Left cardiac atrium (tissue), 4 donors: ENCODE measurements at regions of chr6 and their contacts with region 1.

Region 1: DNA sequence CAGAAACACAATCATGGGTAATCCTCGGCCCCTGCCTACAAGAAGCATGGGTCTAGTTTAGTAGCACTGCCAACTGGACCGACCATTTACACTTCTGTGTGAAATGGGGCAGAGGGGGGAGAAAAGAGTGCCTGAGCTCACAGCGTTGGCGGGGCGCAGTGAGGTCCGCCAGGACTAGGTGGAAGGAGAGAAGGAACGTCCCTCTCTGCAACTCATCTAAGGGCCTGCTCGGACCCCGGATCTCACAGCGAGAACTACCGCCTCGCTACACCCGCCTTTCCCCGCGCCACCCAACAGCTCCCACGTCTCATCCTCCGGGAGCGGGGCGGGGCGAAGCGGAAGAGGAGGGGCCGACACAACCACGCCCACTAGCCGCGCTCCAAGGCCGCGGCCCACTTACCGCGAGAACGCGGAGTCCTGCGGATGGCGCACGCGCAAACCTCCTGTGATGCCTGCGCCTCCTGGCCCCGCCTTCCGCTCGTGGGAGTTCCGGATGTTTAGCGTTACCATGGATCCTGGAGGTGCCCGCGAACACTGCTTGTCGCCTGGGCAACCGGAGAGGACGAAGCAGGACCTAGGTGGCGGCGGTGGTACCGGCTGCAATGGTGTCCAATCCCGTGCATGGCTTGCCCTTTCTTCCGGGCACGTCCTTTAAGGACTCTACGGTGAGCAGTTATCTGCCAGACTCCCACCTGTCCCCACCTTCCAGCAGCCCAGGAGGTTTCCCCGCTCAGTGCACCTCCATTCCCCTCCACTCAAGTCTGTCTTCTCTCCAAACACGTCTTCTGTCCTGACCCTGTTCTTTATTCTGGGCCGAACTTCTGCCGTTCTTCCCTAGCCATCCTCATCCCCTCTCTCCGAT is at the start of gene EFHC1:
- DNase-seq: peak; percentile 99
- ATAC-seq: peak; percentile 96 to 98
- total RNA-seq, gene EFHC1: 7.3 to 7.9 TPM

Region 2: GRCh38 chr6:52497652-52498408 is 77.8 kb after region 1 on chr6:
- intact Hi-C with region 1: loop called in 1 of 2 experiments (anchors 5 kb)
- DNase-seq: peak; percentile 71
- ATAC-seq: peak in 1 of 2 donors; percentile 37

Region 3: GRCh38 chr6:52577022-52577777 is 157.2 kb after region 1 on chr6 and contains the start of gene TRAM2:
- intact Hi-C with region 1: loop called in 1 of 2 experiments (anchors 5 kb)
- DNase-seq: peak; percentile 92
- ATAC-seq: peak; percentile 90 to 93
- total RNA-seq, gene TRAM2: 14.1 to 19.2 TPM

Region 4: DNA sequence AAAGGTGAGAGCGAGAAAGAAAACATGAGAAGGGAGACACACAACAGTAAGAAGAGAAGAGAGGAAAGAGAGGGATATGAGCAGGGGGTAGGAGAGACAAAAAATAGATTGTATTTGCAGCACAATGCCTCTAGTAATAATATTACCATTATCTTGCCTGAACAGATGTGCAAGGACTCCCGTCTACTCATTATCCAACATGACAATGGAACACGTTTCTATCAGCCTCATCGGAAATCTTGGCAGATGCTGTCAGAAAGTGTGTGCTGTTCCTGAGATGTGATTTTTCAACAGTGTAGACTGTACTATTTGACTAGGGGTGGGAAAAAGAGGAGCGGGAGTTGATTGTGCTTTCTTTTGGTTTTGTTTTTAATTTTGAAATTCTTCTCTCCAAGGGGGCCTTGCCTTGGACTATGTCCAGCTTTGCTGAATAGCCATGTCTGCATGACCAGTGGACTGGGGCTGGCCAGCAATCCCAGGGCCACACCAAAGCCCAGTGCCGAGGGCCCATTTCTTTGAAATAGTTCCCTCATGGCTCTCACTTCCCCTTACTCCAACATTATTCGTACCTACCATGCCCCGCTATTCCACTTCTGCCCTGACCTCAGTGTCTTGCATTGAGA is 168.2 kb after region 1 on chr6:
- intact Hi-C with region 1: loop called in 1 of 2 experiments (anchors 5 kb)
- DNase-seq: no peak
- ATAC-seq: no peak

Region 5: GRCh38 chr6:52598123-52598823 is 178.2 kb after region 1 on chr6:
- intact Hi-C with region 1: loop called in 1 of 2 experiments (anchors 2 kb)
- DNase-seq: peak; percentile 69
- ATAC-seq: peak; percentile 55 to 86

Region 6: GRCh38 chr6:52664186-52664990 is 244.3 kb after region 1 on chr6:
- intact Hi-C with region 1: loop called (anchors 1 to 5 kb)
- DNase-seq: peak; percentile 91
- ATAC-seq: peak; percentile 99